ENCODE measurements at regions of chr7 and their contacts with region 1.

Region 1: GRCh38 chr7:99997545-99998137 is 17.8 kb upstream of the ZKSCAN1 start:
- DNase-seq: peak; percentile 76
- CTCF ChIP-seq: peak; percentile 21

Region 2: DNA sequence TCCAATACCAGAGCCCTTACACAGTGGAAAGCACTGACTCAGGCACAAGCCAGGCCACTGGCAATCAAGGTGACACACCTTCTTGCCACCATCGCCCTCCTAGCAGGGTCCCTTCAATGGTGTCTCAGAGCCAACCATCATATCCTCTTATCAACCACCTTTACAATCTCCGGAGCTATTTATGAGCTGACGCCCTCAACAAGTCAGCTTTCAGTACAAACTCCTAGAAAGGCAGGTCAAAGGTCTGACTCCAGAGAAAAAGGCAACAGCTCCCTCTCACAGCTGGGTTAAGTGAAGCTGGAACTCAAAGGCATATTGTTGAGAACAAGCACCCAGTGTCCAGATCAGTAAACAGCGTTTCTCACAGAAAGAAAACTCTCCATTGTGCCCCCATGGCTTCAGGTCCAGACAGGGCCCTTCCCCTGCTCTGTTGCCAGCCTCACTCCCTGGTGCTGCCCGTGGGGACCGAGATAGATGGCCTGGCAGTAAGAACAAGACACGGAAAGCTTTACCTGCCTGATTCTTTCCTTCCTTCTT is 81.5 kb after region 1 on chr7:
- in situ Hi-C with region 1: loop called (anchors 10 kb)
- DNase-seq: no peak
- CTCF ChIP-seq: no peak

Region 3: GRCh38 chr7:100691676-100692577 is 694.3 kb after region 1 on chr7:
- in situ Hi-C with region 1: no loop called
- DNase-seq: peak; percentile 90
- CTCF ChIP-seq: peak; percentile 92

Measured in GM13977 (cell line).